Heart left ventricle (tissue), 16 donors: ENCODE measurements at regions of chr6 and their contacts with region 1.

Region 1: DNA sequence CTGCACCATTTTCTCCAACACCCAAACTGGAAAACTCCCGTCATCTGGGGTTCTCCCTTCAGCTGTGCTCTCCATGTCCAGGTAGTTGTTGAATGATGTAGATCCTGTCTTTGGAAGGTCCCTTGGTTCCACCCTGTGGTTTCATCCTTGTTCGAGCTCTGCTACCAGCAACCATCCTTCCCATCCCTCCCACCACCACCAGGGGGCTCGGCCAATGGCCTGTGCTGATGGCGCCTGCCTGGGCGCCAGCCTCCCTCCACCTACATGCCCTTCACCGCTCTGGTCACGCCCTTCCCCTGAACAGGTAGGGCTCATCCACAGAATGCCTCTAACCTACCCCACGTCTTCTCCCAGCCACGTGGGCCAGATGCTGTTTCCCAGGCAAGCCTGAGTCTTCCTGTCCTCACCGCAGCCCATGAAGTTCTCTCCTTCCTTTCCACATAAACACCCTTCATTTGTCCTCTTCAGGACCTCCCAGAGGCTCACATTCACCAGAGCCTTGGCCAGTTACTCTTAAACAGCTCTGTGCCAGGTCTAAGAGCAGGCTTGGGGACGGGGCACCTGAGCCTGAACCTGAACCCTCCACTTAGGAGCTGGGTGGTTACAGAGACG is 75.1 kb upstream of the DUSP22 start:
- DNase-seq: no peak
- ATAC-seq: no peak
- H3K4me3 ChIP-seq: no peak overlapping the region
- H3K27ac ChIP-seq: no peak overlapping the region
- H3K4me1 ChIP-seq: peaks cover 0 to 28% (median 0%) of the 10 kb centered on the region in 12 donors
- H3K27me3 ChIP-seq: peaks cover 0 to 2% (median 0%) of the 10 kb centered on the region in 9 donors
- CTCF ChIP-seq: peak in 9 of 12 donors; percentile 13 to 50 (median 38)
- POLR2A ChIP-seq: no peak

Region 2: DNA sequence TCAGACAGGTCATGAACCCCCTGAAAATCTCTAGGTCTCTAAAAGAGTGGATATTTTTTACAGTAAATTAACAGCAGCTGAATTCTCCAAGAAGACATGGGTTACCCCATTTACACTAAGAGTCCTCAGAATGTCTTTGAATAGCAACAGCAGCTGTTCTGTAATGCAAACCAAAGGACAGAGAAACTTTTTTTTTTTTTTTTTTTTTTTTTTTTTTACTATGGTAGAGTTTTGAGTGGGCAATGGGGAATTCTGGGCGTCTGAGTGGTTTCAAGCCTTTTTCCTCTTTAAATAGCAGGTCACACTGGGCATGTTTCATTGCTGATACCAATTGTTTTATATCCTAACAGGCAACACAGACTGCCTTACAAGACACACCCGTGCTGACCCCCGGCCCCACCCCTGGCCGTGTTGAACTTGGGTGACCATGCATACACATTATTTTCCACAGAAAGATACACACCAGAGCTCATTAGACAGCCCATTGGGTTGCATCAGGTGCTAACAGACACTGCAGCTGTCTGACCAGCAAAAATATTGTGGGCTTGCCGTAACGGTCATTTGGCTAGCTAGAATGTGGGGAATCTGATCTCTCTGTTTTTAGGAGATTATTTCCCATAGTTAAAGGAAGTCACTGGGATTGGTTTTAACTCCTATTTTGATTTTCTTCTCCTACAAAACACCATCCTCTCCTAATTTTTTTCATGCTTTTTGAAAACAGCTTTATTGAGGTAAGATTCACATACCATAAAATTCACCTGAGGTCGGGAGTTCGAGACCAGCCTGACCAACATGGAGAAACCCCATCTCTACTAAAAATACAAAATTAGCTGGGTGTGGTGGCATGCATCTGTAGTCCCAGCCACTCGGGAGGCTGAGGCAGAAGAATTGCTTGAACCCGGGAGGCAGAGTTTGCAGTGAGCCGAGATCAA is 147.7 kb after region 1 on chr6:
- intact Hi-C with region 1: loop called in 1 of 10 experiments (anchors 10 kb)
- DNase-seq: peak in 1 of 5 donors; percentile 27
- ATAC-seq: no peak
- H3K4me3 ChIP-seq: no peak overlapping the region
- H3K27ac ChIP-seq: no peak overlapping the region
- H3K4me1 ChIP-seq: no peaks in the 10 kb centered on the region
- H3K27me3 ChIP-seq: peaks cover 0 to 30% (median under 1%) of the 10 kb centered on the region in 9 donors
- CTCF ChIP-seq: no peak
- POLR2A ChIP-seq: no peak

Region 3: DNA sequence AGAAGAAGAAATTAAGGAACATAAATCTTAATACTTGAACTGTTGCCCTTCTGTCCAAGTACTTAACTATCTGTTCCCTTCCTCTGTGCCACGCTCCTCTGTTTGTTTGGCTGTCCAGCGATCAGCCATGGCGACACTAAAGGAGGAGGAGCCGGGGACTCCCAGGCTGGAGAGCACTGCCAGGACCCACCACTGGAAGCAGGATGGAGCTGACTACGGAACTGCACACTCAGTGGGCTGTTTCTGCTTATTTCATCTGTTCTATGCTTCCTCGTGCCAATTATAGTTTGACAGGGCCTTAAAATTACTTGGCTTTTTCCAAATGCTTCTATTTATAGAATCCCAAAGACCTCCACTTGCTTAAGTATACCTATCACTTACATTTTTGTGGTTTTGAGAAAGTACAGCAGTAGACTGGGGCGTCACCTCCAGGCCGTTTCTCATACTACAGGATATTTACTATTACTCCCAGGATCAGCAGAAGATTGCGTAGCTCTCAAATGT is 191.5 kb after region 1 on chr6:
- intact Hi-C with region 1: loop called in 2 of 10 experiments (anchors 10 kb)
- DNase-seq: peak in 4 of 5 donors; percentile 39 to 73 (median 54)
- ATAC-seq: peak; percentile 97 to 100 (median 98)
- H3K4me3 ChIP-seq: no peak overlapping the region
- H3K27ac ChIP-seq: peak overlapping the region in 1 of 12 donors; percentile 29
- H3K4me1 ChIP-seq: peaks cover 0 to 11% (median 0%) of the 10 kb centered on the region in 12 donors
- H3K27me3 ChIP-seq: peaks cover 0 to 19% (median 0%) of the 10 kb centered on the region in 9 donors
- CTCF ChIP-seq: peak; percentile 19 to 53 (median 38)
- POLR2A ChIP-seq: no peak

Region 4: GRCh38 chr6:446418-447366 is 229.5 kb after region 1 on chr6:
- intact Hi-C with region 1: no loop called
- DNase-seq: peak in 1 of 5 donors; percentile 8
- ATAC-seq: no peak
- H3K4me3 ChIP-seq: peak overlapping the region in 1 of 12 donors; percentile 25
- H3K27ac ChIP-seq: no peak overlapping the region
- H3K4me1 ChIP-seq: peaks cover 0 to 7% (median 0%) of the 10 kb centered on the region in 12 donors
- H3K27me3 ChIP-seq: peaks cover 0 to 7% (median 0%) of the 10 kb centered on the region in 9 donors
- CTCF ChIP-seq: no peak
- POLR2A ChIP-seq: no peak

Region 5: GRCh38 chr6:753486-753885 is 536.3 kb after region 1 on chr6:
- intact Hi-C with region 1: no loop called
- DNase-seq: no peak
- ATAC-seq: no peak
- H3K4me3 ChIP-seq: no peak overlapping the region
- H3K27ac ChIP-seq: no peak overlapping the region
- H3K4me1 ChIP-seq: no peaks in the 10 kb centered on the region
- H3K27me3 ChIP-seq: peaks cover 0 to 2% (median 0%) of the 10 kb centered on the region in 9 donors
- CTCF ChIP-seq: no peak
- POLR2A ChIP-seq: no peak